ENCODE measurements at regions of chr2 and their contacts with region 1.

Region 1: GRCh38 chr2:146853741-146854444 is 990.9 kb upstream of the ACVR2A start:
- DNase-seq: no peak
- ATAC-seq: no peak
- H3K4me3 ChIP-seq: no peak overlapping the region
- H3K27ac ChIP-seq: no peak overlapping the region
- H3K4me1 ChIP-seq: no peaks in the 10 kb centered on the region
- H3K27me3 ChIP-seq: no peaks in the 10 kb centered on the region; a peak in 1 of 4 replicates
- CTCF ChIP-seq: no peak
- EP300 ChIP-seq: no peak
- POLR2A ChIP-seq: no peak
- RAD21 ChIP-seq: no peak

Region 2: GRCh38 chr2:146642066-146642465 is 211.8 kb before region 1 on chr2:
- CTCF ChIA-PET with region 1: no interaction called
- POLR2A ChIA-PET with region 1: no interaction called
- RAD21 ChIA-PET with region 1: no interaction called
- SMC1A ChIA-PET with region 1: no interaction called
- in situ Hi-C with region 1: no loop called
- intact Hi-C with region 1: no loop called
- DNase-seq: no peak
- ATAC-seq: no peak
- H3K4me3 ChIP-seq: no peak overlapping the region
- H3K27ac ChIP-seq: no peak overlapping the region
- H3K4me1 ChIP-seq: no peaks in the 10 kb centered on the region
- H3K27me3 ChIP-seq: no peaks in the 10 kb centered on the region
- CTCF ChIP-seq: no peak
- EP300 ChIP-seq: no peak
- POLR2A ChIP-seq: no peak
- RAD21 ChIP-seq: no peak

Region 3: GRCh38 chr2:146867472-146867986 is 13.6 kb after region 1 on chr2:
- CTCF ChIA-PET with region 1: no interaction called
- POLR2A ChIA-PET with region 1: interaction called, 3 read pairs
- RAD21 ChIA-PET with region 1: interaction called, 4 read pairs
- SMC1A ChIA-PET with region 1: interaction called, 20 read pairs
- in situ Hi-C with region 1: no loop called
- intact Hi-C with region 1: no loop called
- DNase-seq: no peak
- ATAC-seq: peak; percentile 59
- H3K4me3 ChIP-seq: no peak overlapping the region
- H3K27ac ChIP-seq: no peak overlapping the region
- H3K4me1 ChIP-seq: no peaks in the 10 kb centered on the region
- H3K27me3 ChIP-seq: no peaks in the 10 kb centered on the region
- CTCF ChIP-seq: no peak
- EP300 ChIP-seq: no peak
- POLR2A ChIP-seq: no peak
- RAD21 ChIP-seq: no peak

Region 4: GRCh38 chr2:147715807-147716206 is 861.9 kb after region 1 on chr2:
- CTCF ChIA-PET with region 1: no interaction called
- POLR2A ChIA-PET with region 1: no interaction called
- RAD21 ChIA-PET with region 1: no interaction called
- SMC1A ChIA-PET with region 1: no interaction called
- in situ Hi-C with region 1: no loop called
- intact Hi-C with region 1: no loop called
- DNase-seq: peak; percentile 19
- ATAC-seq: peak; percentile 95
- H3K4me3 ChIP-seq: no peak overlapping the region
- H3K27ac ChIP-seq: no peak overlapping the region
- H3K4me1 ChIP-seq: peaks cover 9% of the 10 kb centered on the region
- H3K27me3 ChIP-seq: no peaks in the 10 kb centered on the region; a peak in 1 of 4 replicates
- CTCF ChIP-seq: no peak
- EP300 ChIP-seq: no peak
- POLR2A ChIP-seq: no peak
- RAD21 ChIP-seq: no peak